GM18951 (cell line): ENCODE measurements at regions of chr17 and their contacts with region 1.

Region 1: DNA sequence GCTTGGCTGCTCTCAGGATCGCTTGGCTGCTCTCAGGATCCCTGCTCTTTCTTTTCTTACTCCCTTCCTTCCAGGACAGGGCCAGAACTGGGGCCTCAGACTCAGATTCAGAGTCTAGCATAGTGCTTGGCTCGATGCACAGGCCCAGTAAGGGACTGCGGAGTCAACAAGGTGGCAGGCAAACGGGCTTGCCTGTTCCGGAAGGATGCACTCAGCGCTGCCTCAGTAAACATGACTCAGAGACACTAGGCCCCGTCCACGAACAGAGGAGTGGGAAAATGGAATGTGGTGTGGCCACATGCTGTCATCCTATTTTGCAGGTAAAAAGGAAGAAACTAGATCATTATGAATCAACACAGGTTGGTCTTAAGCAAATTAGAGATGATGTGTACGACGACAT is 9.8 kb downstream of the SPHK1 start:
- POLR2A ChIP-seq: no peak

Region 2: DNA sequence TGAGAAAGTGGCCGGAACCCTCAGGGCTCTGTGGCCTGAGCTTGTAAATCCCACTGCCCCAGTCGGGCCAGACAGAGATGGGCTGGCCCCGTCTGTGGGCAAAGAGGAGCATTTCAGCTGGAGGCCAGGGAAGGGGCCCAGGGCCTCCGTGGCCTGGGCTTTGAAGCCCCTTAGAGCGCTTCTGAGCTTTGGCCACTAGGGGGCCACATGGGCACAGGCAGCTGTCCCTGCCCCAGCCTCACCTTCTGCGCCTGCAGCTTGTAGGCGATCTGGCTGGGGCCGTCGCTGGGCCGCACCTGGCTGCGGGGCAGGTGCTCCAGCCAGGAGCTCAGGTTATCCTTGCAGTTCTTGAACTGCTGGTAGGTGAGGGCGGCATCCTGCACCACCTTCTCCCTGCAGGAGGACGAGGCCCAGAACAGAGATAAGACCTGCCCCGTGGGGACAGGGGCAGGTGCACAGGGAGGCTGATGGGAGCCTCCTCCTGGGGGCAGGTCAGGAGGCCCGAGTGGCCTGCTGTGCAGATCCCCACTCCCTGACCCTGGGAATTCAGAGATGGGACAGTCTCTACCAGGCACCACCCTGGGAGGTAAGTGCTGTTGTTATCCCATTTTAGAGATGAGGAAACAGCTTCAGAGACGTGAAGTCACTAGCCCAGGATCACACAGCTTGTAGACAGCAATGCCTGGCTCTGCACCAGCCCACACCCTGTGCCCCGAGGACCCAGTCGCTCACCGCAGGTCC is 379.8 kb before region 1 on chr17:
- in situ Hi-C with region 1: no loop called
- POLR2A ChIP-seq: no peak

Region 3: DNA sequence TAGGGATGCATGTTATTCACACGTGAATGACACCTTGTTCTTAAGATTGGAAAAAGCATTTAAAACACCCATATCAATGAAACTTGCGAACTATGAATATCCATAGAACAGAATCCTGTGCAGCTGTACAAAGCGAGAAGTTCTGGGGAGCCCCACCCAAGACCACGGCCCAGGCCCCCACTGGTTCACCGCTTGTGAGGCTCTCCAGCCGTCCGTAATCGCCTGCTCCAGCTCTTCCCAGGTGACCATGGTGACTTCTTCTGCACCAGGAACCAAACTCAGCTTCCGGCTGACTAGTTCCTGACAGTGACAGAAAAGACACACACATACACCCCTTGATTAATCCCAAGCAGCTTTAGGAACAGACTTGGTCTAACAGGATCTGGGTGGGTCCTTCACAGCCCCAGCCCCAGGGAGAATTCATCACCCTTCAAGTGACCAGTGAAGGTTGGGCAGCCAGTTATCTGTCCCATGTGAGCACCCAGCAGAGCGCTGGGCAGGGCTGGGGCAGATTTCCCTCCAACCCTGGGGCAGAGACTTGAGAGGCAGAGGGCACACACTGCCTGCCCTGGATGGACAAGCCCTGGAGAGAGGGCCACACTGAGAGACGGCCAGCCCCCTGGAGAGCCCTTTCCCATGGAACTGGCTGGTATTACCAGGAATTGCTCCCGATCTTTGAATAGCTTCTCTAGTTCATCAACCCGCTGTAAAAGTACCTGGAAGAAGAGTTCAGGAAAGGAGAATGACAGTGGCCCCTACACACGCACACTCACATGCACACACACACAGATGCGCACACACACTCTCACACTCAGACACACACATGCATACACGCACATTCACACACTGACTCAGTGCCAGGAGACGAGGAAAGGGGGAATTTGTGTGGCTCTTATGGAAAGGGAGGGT is 89.7 kb before region 1 on chr17:
- in situ Hi-C with region 1: loop called (anchors 5 kb)
- POLR2A ChIP-seq: no peak

Region 4: GRCh38 chr17:76452660-76453430 is 58.7 kb after region 1 on chr17 and contains the start of gene UBE2O:
- in situ Hi-C with region 1: no loop called
- POLR2A ChIP-seq: peak; percentile 83

Region 5: GRCh38 chr17:76481071-76481655 is 87.0 kb after region 1 on chr17:
- in situ Hi-C with region 1: no loop called
- POLR2A ChIP-seq: peak; percentile 48